IMR-90 (cell line): ENCODE measurements at regions of chr10 and their contacts with region 1.

Region 1: DNA sequence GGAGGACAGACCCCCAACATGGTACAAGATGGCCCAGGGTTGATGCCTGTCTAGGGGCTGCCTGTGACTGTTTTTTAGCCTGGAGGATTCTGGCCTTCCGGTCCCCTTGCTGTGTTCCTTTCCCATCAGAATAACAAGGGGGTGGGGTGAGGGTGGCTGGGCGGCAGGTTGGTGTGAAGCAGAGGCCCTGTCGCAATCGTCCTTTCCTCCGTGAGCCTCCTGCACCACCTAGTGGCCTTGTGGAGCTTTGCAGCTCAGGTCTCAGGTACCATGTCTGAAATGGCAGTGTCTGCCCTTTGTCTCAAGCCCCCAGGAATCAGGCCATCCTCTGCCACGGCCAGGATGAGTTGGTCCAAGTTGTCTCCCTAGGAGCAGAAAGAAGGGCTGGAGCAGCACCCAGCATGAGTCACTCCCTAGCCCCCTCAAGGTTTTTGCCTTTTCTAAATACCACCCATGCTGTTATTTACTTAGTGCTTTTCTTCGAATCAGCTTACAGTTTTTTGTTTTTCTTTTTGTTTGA is 24.2 kb downstream of the TACR2 start:
- DNase-seq: peak; percentile 77
- ATAC-seq: peak; percentile 98
- H3K4me3 ChIP-seq: no peak overlapping the region
- H3K27ac ChIP-seq: no peak overlapping the region
- H3K4me1 ChIP-seq: no peaks in the 10 kb centered on the region; the same call in 1 of the 2 replicates
- H3K27me3 ChIP-seq: no peaks in the 10 kb centered on the region
- CTCF ChIP-seq: peak; percentile 95
- POLR2A ChIP-seq: 0 out of 2 replicates have a peak, but pooled peaks have one; percentile 24
- RAD21 ChIP-seq: peak; percentile 99

Region 2: GRCh38 chr10:69232252-69232651 is 160.3 kb before region 1 on chr10:
- CTCF ChIA-PET with region 1: interaction called, 5 read pairs
- POLR2A ChIA-PET with region 1: interaction called, 3 read pairs
- dilution Hi-C with region 1: no loop called
- in situ Hi-C with region 1: loop called (anchors 5 kb)
- intact Hi-C with region 1: loop called (anchors 1 kb)
- DNase-seq: peak; percentile 85
- ATAC-seq: peak; percentile 100
- H3K4me3 ChIP-seq: no peak overlapping the region
- H3K27ac ChIP-seq: no peak overlapping the region
- H3K4me1 ChIP-seq: peaks cover 2% of the 10 kb centered on the region; the same call in 1 of the 2 replicates
- H3K27me3 ChIP-seq: peaks cover 2% of the 10 kb centered on the region; the same call in 1 of the 2 replicates
- CTCF ChIP-seq: no peak
- POLR2A ChIP-seq: no peak
- RAD21 ChIP-seq: no peak

Region 3: DNA sequence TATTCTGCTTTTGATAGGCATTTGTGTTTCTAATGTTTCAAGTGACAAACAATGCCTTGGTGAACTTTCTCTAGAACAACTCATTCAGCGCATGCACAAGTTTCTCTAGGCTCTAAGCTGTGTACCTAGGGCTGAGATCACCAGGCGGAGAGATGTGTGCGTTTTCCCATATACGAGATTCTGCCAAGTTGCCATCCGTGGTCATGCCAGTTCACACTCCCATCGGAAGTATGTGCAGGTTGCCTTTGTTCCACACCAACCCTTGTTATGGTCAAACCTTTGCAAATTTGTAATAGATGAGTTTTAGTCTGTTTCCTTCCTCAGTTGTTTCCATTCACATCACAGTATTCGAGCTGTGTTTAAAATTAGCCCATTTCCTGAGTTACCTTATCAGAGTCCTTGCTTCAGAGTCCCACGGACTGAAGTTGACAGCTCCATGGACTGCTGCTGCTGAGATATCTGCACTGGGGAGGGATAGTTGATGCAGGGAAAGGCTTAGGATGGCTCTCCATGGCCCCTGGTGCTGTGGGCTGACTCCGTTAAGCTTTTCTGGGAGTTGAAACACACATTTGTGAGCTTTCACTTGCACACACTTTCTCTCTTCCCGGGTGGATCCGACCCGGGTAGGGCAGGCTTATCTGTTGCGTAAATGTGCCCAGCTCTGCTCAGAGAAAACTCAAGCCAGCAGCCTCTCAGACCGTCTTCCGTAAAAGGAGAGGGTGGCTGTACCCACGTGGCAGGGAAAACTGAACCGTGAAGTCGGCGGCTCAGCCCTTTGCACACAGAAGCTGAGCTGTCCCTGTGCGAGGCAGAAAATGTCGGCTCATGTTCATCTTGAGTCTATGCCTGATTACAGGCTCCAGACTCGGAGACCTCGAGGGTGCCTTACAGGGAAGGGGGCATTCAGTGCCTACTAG is 64.8 kb before region 1 on chr10:
- CTCF ChIA-PET with region 1: no interaction called
- POLR2A ChIA-PET with region 1: no interaction called
- dilution Hi-C with region 1: no loop called
- in situ Hi-C with region 1: no loop called
- intact Hi-C with region 1: no loop called
- DNase-seq: peak; percentile 63
- ATAC-seq: peak; percentile 93
- H3K4me3 ChIP-seq: peak overlapping the region; percentile 26
- H3K27ac ChIP-seq: peak overlapping the region; percentile 75
- H3K4me1 ChIP-seq: peaks cover 9% of the 10 kb centered on the region
- H3K27me3 ChIP-seq: no peaks in the 10 kb centered on the region
- CTCF ChIP-seq: no peak
- POLR2A ChIP-seq: no peak
- RAD21 ChIP-seq: no peak